H1 (cell line): ENCODE measurements at regions of chr14 and their contacts with region 1.

Region 1: GRCh38 chr14:36070031-36070719 is 106.3 kb downstream of the PTCSC3 start:
- DNase-seq: peak; percentile 44 to 70
- H3K4me3 ChIP-seq: no peak overlapping the region
- H3K27ac ChIP-seq: no peak overlapping the region
- H3K4me1 ChIP-seq: no peaks in the 10 kb centered on the region
- H3K27me3 ChIP-seq: no peaks in the 10 kb centered on the region
- CTCF ChIP-seq: peak; percentile 84 to 92 (median 87)
- EP300 ChIP-seq: no peak
- POLR2A ChIP-seq: no peak
- RAD21 ChIP-seq: peak; percentile 92 to 96

Region 2: DNA sequence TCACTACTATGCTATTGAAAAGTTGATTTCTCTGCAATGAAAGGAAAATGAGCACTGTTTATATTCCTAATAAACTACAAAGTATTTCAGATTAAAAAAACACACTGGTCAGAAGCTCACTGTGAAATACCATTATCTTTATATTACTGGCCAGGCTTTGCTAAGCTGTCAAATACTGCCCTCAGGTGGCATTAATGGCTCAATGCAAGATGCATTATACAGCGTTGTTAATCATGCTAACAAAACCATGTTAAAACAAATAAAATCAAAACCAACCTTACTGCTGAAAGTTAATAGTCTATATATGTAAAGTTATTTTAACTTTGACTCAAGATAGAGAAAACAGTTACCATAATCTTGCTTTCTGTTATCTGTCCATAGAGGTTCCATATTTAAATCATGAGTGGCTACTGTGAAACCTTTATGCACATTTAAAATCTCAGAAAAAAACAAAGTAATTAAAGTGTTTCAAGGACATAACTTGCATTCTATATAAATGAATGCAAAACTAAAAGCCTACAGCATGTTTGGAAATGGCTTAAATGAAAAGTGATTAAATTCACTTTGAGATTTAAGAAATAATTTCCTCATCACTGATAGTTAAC is 382.7 kb before region 1 on chr14:
- CTCF ChIA-PET with region 1: no interaction called
- POLR2A ChIA-PET with region 1: no interaction called
- DNase-seq: no peak
- H3K4me3 ChIP-seq: no peak overlapping the region
- H3K27ac ChIP-seq: no peak overlapping the region
- H3K4me1 ChIP-seq: no peaks in the 10 kb centered on the region
- H3K27me3 ChIP-seq: no peaks in the 10 kb centered on the region
- CTCF ChIP-seq: peak in 2 of 3 experiments; percentile 72 to 75; a peak in 3 of 4 replicates
- EP300 ChIP-seq: no peak
- POLR2A ChIP-seq: no peak
- RAD21 ChIP-seq: peak; percentile 96 to 97

Region 3: DNA sequence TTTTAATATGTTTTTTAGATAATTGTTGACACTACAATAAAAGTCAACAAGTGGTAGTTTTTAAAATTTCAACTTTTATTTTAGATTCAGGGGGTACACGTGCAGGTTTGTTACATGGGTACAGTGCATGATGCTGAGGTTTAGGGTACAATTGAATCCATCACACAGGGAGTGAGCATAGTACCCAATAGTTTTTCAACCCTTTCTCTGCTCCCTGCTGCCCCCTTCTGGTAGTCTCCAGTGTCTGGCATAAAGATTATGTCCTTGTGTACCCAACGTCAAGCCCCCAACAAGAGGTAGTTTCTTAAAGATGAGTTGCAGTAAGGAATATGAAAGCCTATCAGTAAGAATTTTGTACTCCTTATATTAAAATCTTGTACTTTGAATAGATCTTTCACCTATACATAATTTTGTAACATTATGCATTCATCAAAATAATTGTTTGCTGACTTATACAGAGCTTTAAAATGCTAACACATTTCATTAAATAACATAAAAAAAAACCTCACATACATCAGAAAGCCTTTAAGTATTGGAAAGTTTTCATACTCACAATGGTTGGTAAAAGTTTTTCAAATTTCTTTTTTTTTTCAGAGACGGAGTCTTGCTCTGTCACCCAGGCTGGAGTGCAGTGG is 255.7 kb before region 1 on chr14:
- CTCF ChIA-PET with region 1: no interaction called
- POLR2A ChIA-PET with region 1: no interaction called
- DNase-seq: peak in 1 of 2 experiments; percentile 91
- H3K4me3 ChIP-seq: no peak overlapping the region
- H3K27ac ChIP-seq: no peak overlapping the region
- H3K4me1 ChIP-seq: no peaks in the 10 kb centered on the region
- H3K27me3 ChIP-seq: no peaks in the 10 kb centered on the region
- CTCF ChIP-seq: peak; percentile 31 to 83 (median 58)
- EP300 ChIP-seq: no peak
- POLR2A ChIP-seq: no peak
- RAD21 ChIP-seq: peak; percentile 39 to 55

Region 4: DNA sequence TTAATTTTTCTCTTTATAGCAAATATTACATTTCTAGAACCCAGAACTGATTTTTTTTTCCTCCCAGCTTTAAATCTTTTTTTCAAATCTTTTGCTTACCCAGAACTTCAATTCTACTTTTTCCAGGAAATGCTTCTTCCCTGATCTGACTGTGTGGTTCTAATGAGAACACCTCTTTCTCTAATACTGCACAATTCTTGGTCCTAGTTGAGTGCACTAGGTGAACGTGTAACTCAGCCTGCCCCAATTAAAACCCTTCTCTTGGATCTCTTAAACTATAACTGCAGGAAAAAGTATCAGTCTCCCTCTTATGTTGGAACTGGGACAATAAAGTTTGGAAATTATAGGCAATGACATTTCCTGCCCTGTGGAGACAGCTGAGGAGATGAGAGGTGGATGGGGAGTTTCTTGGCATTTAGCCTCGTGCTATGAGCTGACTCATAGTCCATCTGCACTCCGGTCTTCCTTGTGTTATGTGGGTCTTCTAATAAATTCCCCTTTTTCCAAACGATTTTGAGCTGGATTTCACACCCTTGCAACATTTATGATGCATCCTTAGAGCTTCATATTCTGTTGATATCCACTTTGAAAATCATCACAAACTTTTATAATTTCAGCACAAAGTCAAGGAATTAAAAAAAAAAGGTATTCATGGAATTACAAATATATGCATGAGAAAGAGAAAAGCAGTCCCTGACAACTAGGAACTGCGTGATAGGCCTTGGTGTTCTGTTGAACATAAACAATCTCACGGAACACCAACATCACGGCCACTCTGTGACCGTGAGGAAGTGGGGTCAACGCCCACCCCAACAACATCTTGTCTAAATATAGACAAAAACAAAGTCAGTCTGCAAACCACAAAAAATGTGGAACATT is 191.7 kb before region 1 on chr14:
- CTCF ChIA-PET with region 1: interaction called, 78 read pairs
- POLR2A ChIA-PET with region 1: no interaction called
- DNase-seq: no peak
- H3K4me3 ChIP-seq: no peak overlapping the region
- H3K27ac ChIP-seq: no peak overlapping the region
- H3K4me1 ChIP-seq: no peaks in the 10 kb centered on the region
- H3K27me3 ChIP-seq: no peaks in the 10 kb centered on the region
- CTCF ChIP-seq: no peak
- EP300 ChIP-seq: no peak
- POLR2A ChIP-seq: no peak
- RAD21 ChIP-seq: no peak

Region 5: DNA sequence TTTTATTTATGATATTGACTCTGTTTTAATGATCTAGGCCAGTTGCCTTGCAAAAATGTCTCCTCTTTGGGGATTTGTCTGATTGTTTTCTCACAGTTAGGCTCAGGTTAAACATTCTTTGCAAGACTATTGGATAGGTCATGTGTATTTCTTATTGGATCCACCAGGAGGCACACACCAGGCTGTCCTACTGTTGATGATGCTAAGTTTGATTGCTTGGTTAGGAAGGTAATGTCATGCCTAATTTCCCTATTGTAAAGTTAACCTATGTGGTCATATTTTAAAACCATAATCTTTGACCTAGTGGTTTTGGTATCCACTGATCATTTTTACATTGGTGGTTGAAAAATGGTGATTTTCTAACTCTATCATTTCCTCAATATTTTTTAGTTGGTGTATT is 107.0 kb before region 1 on chr14:
- CTCF ChIA-PET with region 1: interaction called, 79 read pairs
- POLR2A ChIA-PET with region 1: no interaction called
- DNase-seq: no peak
- H3K4me3 ChIP-seq: no peak overlapping the region
- H3K27ac ChIP-seq: no peak overlapping the region
- H3K4me1 ChIP-seq: no peaks in the 10 kb centered on the region
- H3K27me3 ChIP-seq: no peaks in the 10 kb centered on the region
- CTCF ChIP-seq: peak in 2 of 3 experiments; percentile 57 to 72; a peak in 3 of 4 replicates
- EP300 ChIP-seq: no peak
- POLR2A ChIP-seq: no peak
- RAD21 ChIP-seq: peak; percentile 54 to 64

Region 6: DNA sequence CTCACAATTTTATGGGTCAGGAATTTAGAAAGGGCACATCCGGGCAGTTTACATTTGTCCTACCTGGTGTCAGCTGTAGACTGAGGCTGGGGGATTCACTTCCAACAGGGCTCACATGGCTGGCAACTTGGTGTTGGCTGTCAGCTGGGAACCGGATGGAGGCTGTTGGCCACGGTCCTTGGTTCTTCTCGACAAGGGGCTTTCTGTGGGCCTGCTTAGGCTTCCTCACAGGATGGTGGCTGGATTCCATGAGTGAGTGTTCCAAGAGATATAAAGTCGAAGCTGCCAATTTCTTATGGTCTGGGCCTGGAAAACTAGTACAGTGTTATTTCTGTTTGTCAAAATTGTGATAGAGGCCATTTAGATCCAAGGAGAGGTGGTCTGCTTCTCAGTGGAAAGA is 21.5 kb before region 1 on chr14:
- CTCF ChIA-PET with region 1: interaction called, 34 read pairs
- POLR2A ChIA-PET with region 1: no interaction called
- DNase-seq: no peak
- H3K4me3 ChIP-seq: no peak overlapping the region
- H3K27ac ChIP-seq: no peak overlapping the region
- H3K4me1 ChIP-seq: peaks cover 0 to 10% (median 0%) of the 10 kb centered on the region in 4 experiments; a peak in 1 of 7 replicates
- H3K27me3 ChIP-seq: no peaks in the 10 kb centered on the region
- CTCF ChIP-seq: no peak
- EP300 ChIP-seq: no peak
- POLR2A ChIP-seq: no peak
- RAD21 ChIP-seq: no peak

Region 7: GRCh38 chr14:36105401-36105800 is 35.2 kb after region 1 on chr14:
- CTCF ChIA-PET with region 1: interaction called, 30 read pairs
- POLR2A ChIA-PET with region 1: no interaction called
- DNase-seq: peak in 1 of 2 experiments; percentile 53
- H3K4me3 ChIP-seq: no peak overlapping the region
- H3K27ac ChIP-seq: no peak overlapping the region
- H3K4me1 ChIP-seq: peaks cover 0 to 2% (median 0%) of the 10 kb centered on the region in 4 experiments; a peak in 2 of 7 replicates
- H3K27me3 ChIP-seq: no peaks in the 10 kb centered on the region
- CTCF ChIP-seq: peak; percentile 39 to 81 (median 81)
- EP300 ChIP-seq: no peak
- POLR2A ChIP-seq: no peak
- RAD21 ChIP-seq: peak; percentile 96

Region 8: GRCh38 chr14:36520601-36521525 is 450.7 kb after region 1 on chr14:
- CTCF ChIA-PET with region 1: interaction called, 18 read pairs
- POLR2A ChIA-PET with region 1: no interaction called
- DNase-seq: peak in 1 of 2 experiments; percentile 80
- H3K4me3 ChIP-seq: peak overlapping the region in 3 of 4 experiments; percentile 11 to 47 (median 23); a peak in 4 of 8 replicates
- H3K27ac ChIP-seq: no peak overlapping the region
- H3K4me1 ChIP-seq: peaks cover 0 to 25% (median 14%) of the 10 kb centered on the region in 4 experiments; a peak in 6 of 7 replicates
- H3K27me3 ChIP-seq: peaks cover 94 to 100% (median 98%) of the 10 kb centered on the region in 4 experiments
- CTCF ChIP-seq: peak in 2 of 3 experiments; percentile 39 to 46; a peak in 3 of 4 replicates
- EP300 ChIP-seq: no peak
- POLR2A ChIP-seq: no peak
- RAD21 ChIP-seq: peak; percentile 12 to 21; a peak in 2 of 4 replicates